ENCODE measurements at regions of chr16 and their contacts with region 1.

Region 1: DNA sequence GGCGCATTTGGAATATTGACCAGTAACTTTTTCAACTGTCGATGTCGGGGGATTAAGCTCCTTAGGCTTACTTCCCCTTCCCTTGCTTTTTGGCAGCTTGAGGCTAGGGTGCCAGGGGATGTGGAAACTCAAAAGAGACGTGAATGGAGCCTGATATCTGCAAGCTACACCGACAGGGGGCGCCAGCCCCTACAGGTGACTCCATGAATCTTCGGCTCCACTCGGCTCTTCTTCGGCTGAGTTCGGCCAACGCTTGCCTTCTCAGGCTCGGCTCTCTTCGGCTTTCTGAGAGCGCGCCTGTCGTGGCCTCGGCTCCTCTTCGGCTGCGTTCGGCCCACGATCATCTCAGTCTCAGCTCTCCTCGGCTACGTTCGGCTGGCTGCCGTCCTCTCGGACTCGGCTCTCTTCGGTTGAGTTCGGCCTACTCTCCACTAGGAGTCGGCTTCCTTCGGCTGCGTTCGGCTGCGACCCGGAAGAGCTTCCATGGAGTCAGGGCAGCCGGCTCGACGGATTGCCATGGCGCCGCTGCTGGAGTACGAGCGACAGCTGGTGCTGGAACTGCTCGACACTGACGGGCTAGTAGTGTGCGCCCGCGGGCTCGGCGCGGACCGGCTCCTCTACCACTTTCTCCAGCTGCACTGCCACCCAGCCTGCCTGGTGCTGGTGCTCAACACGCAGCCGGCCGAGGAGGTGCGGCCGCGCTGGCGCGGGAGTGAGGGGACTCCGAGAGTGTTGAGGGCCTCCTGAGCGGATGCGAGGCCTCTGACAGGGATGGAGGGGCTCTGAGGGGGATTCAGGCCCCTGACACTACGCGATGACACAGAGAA is at the start of gene ERCC4:
- DNase-seq: peak; percentile 99
- H3K4me3 ChIP-seq: peak within 1 kb of the TSS; percentile 95
- H3K27ac ChIP-seq: peak within 1 kb of the TSS; percentile 87
- H3K4me1 ChIP-seq: peaks cover 7% of the 10 kb centered on the region
- H3K27me3 ChIP-seq: no peaks in the 10 kb centered on the region
- CTCF ChIP-seq: peak; percentile 95
- total RNA-seq, gene ERCC4: 18.5 and 18.8 TPM in 2 replicates

Region 2: GRCh38 chr16:13733546-13733945 is 186.3 kb before region 1 on chr16:
- CTCF ChIA-PET with region 1: interaction called, 10 read pairs
- POLR2A ChIA-PET with region 1: no interaction called
- intact Hi-C with region 1: no loop called
- DNase-seq: no peak
- H3K4me3 ChIP-seq: no peak overlapping the region
- H3K27ac ChIP-seq: no peak overlapping the region
- H3K4me1 ChIP-seq: no peaks in the 10 kb centered on the region
- H3K27me3 ChIP-seq: no peaks in the 10 kb centered on the region
- CTCF ChIP-seq: no peak

Region 3: DNA sequence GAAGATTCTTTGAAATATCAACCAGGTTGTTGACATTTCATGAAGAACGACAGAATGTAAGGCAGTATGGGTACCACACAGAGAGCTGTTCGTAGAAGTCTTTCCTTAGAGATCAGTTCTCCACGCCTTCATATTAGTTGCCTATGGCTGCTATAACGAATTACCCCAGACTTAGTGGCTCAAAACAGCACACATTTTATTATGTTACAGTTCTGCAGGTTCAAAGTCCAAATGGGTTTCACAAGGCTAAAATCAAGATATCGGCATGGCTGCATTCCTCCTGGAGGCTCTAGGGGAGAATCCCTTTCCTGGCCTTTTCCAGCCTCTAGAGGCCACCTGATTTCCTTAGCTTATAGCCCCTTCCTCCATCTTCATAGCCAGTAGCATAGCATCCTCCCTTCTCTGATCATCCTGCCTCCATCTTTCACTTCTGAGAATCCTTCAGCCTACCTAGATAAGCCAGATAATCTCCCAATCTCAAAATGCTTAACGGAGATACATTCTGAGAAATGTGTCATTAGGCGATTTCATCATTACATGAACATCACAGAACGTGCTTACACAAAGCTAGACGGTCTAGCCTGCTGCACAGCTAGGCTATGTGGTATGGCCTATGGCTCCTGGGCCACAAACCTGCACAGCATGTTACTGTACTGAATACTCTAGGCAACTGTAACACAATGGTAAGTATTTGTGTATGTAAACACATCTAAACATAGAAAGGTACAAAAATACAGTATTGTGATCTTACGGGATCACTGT is 26.0 kb after region 1 on chr16:
- CTCF ChIA-PET with region 1: no interaction called
- POLR2A ChIA-PET with region 1: no interaction called
- intact Hi-C with region 1: no loop called
- DNase-seq: no peak
- H3K4me3 ChIP-seq: no peak overlapping the region
- H3K27ac ChIP-seq: no peak overlapping the region
- H3K4me1 ChIP-seq: no peaks in the 10 kb centered on the region
- H3K27me3 ChIP-seq: no peaks in the 10 kb centered on the region
- CTCF ChIP-seq: no peak

Region 4: GRCh38 chr16:14285513-14286385 is 365.9 kb after region 1 on chr16:
- CTCF ChIA-PET with region 1: interaction called, 5 read pairs
- POLR2A ChIA-PET with region 1: no interaction called
- intact Hi-C with region 1: loop called (anchors 5 kb)
- DNase-seq: peak; percentile 97
- H3K4me3 ChIP-seq: peak overlapping the region; percentile 79
- H3K27ac ChIP-seq: peak overlapping the region; percentile 67
- H3K4me1 ChIP-seq: peaks cover 1% of the 10 kb centered on the region
- H3K27me3 ChIP-seq: no peaks in the 10 kb centered on the region
- CTCF ChIP-seq: no peak

Region 5: DNA sequence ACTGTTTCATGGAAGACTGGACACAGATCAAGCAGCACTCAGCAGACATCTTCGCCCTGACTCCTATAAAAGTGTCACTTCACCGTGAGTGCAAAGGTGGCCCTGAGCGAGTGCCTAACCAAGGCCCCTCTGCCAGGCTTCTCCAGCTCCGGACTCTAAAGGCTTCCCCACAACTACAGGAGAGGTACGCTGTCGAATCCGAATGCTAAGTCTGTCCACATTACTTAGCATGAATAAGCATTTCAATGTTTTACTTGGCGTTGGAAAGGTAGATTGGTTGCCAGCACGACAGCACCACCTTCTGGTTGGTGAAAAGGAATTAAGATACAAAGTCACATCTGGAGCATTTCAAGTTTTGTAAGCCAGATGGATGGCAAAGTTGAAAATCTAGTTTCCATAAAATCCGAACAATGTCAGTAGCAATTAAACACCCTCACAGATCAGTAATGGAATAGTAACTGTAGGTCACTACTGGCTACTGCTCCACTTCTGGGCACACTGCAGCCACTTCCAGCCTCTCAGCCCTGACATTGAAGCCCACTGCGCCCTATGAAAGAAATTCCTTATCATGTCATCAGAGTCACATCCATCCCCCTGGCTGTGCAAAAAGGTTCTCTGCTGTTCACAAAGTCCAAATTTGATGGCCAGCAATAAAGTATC is 609.2 kb after region 1 on chr16:
- CTCF ChIA-PET with region 1: no interaction called
- POLR2A ChIA-PET with region 1: no interaction called
- intact Hi-C with region 1: loop called (anchors 2 kb)
- DNase-seq: peak; percentile 87
- H3K4me3 ChIP-seq: no peak overlapping the region
- H3K27ac ChIP-seq: peak overlapping the region; percentile 11
- H3K4me1 ChIP-seq: peaks cover 18% of the 10 kb centered on the region
- H3K27me3 ChIP-seq: no peaks in the 10 kb centered on the region
- CTCF ChIP-seq: peak; percentile 78